ENCODE measurements at regions of chr17 and their contacts with region 1.

Region 1: GRCh38 chr17:44533533-44534246 is 23.6 kb upstream of the FZD2 start:
- DNase-seq: peak; percentile 97

Region 2: GRCh38 chr17:44636562-44636961 is 102.9 kb after region 1 on chr17:
- intact Hi-C with region 1: loop called (anchors 2 to 5 kb)
- DNase-seq: no peak

Measured in posterior vena cava (tissue), 2 donors.